ENCODE measurements at regions of chr3 and their contacts with region 1.

Region 1: GRCh38 chr3:136075218-136075808 is 109.8 kb downstream of the PPP2R3A start:
- DNase-seq: peak; percentile 87
- H3K4me3 Mint-ChIP-seq: no peak overlapping the region
- H3K27ac Mint-ChIP-seq: no peak overlapping the region
- H3K4me1 Mint-ChIP-seq: peaks cover 4% of the 10 kb centered on the region
- H3K27me3 Mint-ChIP-seq: peaks cover 4% of the 10 kb centered on the region

Region 2: GRCh38 chr3:136353461-136353860 is 278.1 kb after region 1 on chr3:
- CTCF ChIA-PET with region 1: interaction called, 5 read pairs
- intact Hi-C with region 1: loop called (anchors 1 kb)
- DNase-seq: peak; percentile 61
- H3K4me3 Mint-ChIP-seq: no peak overlapping the region
- H3K27ac Mint-ChIP-seq: peak overlapping the region; percentile 82
- H3K4me1 Mint-ChIP-seq: peaks cover 12% of the 10 kb centered on the region
- H3K27me3 Mint-ChIP-seq: no peaks in the 10 kb centered on the region

Region 3: GRCh38 chr3:136617198-136617597 is 541.9 kb after region 1 on chr3:
- CTCF ChIA-PET with region 1: no interaction called
- intact Hi-C with region 1: loop called (anchors 10 kb)
- DNase-seq: no peak
- H3K4me3 Mint-ChIP-seq: no peak overlapping the region
- H3K27ac Mint-ChIP-seq: no peak overlapping the region
- H3K4me1 Mint-ChIP-seq: peaks cover 4% of the 10 kb centered on the region
- H3K27me3 Mint-ChIP-seq: no peaks in the 10 kb centered on the region

Region 4: GRCh38 chr3:136861890-136862616 is 786.7 kb after region 1 on chr3 and contains the start of gene NCK1:
- CTCF ChIA-PET with region 1: no interaction called
- intact Hi-C with region 1: loop called (anchors 5 kb)
- DNase-seq: peak; percentile 99
- H3K4me3 Mint-ChIP-seq: peak within 1 kb of the TSS; percentile 94
- H3K27ac Mint-ChIP-seq: peak within 1 kb of the TSS; percentile 95
- H3K4me1 Mint-ChIP-seq: peaks cover 41% of the 10 kb centered on the region
- H3K27me3 Mint-ChIP-seq: no peaks in the 10 kb centered on the region
- total RNA-seq, gene NCK1: 24.1 to 29.2 TPM

Region 5: GRCh38 chr3:137032465-137033120 is 957.3 kb after region 1 on chr3:
- CTCF ChIA-PET with region 1: interaction called, 3 read pairs
- intact Hi-C with region 1: loop called (anchors 1 kb)
- DNase-seq: peak; percentile 91
- H3K4me3 Mint-ChIP-seq: peak overlapping the region; percentile 40
- H3K27ac Mint-ChIP-seq: no peak overlapping the region
- H3K4me1 Mint-ChIP-seq: peaks cover 7% of the 10 kb centered on the region
- H3K27me3 Mint-ChIP-seq: peaks cover 15% of the 10 kb centered on the region

Region 6: DNA sequence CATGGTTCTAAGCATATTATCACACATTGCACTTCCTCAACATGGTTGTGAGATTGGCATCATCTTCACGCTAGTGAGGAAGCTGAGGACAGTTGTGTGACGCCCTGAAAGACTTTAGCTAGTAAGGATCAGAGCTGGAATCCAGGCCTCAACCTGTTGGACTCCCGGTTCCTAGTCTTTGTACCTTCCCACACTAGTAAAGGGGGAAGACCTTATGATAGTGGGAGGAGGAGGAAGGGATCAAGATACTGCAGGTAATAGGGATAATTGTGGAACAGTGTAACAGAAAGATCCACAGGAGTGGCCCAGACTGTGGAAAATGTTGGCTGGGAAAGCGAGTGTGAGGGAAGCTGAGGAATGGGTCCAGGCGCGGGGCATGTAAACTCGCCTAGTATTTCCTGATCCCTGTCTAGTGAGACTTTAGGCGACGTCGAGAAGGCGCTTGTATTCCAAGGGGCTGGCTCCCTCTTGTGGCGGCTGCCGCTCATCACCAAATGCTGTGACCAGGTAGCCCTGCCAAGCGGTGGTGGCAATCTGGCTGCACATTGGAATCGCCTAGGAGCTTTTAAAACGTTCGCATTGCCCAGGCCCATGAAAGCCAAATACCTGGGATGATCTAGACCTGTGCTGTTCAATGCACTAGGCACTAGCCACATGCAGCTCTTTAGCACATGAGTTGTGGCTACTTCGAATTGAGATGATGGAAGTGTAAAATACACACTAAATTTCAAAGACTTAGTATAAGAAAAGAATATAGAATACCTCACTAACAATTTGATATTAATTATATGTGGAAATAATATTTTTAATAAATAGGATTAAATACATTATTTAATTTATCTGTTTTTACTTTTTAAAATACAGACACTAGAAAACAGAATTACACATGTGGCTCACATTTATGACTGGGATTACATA is 1895.9 kb after region 1 on chr3:
- CTCF ChIA-PET with region 1: no interaction called
- intact Hi-C with region 1: loop called (anchors 5 kb)
- DNase-seq: peak; percentile 77
- H3K4me3 Mint-ChIP-seq: no peak overlapping the region
- H3K27ac Mint-ChIP-seq: no peak overlapping the region
- H3K4me1 Mint-ChIP-seq: no peaks in the 10 kb centered on the region
- H3K27me3 Mint-ChIP-seq: peaks cover 12% of the 10 kb centered on the region